HEK293T (cell line): ENCODE measurements at regions of chr14 and their contacts with region 1.

Region 1: DNA sequence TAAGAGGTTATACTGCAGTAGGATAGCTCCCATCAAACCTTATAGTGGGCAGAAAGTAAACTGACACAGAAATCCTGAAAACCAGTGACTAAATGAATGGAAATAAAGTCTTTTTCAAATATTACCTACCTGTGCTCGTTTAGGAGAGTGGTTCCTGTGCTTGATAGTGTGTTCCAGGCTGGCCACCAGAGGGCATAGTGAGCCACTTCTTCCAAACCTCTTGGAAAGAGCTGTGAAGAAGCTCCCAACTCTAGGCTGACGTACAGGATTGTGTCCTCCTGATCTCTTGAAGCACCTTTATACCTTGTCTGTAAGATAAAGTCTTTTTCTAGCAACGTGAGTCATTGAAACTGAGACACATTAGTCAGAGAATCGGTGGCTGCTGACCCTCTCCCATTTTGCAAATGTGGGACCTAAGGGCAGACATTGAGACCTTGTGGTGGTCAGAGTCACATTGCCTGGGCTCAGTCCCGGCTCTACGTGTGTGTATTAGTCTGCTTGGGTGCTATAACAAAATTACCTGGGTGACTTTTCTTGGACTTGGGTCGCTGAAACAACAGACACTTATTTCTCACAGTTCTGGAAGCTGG is 17.6 kb downstream of the TDP1 start:
- DNase-seq: peak; percentile 72

Region 2: GRCh38 chr14:89936658-89937185 is 36.6 kb before region 1 on chr14:
- CTCF ChIA-PET with region 1: interaction called, 15 read pairs
- POLR2A ChIA-PET with region 1: no interaction called
- DNase-seq: no peak

Region 3: DNA sequence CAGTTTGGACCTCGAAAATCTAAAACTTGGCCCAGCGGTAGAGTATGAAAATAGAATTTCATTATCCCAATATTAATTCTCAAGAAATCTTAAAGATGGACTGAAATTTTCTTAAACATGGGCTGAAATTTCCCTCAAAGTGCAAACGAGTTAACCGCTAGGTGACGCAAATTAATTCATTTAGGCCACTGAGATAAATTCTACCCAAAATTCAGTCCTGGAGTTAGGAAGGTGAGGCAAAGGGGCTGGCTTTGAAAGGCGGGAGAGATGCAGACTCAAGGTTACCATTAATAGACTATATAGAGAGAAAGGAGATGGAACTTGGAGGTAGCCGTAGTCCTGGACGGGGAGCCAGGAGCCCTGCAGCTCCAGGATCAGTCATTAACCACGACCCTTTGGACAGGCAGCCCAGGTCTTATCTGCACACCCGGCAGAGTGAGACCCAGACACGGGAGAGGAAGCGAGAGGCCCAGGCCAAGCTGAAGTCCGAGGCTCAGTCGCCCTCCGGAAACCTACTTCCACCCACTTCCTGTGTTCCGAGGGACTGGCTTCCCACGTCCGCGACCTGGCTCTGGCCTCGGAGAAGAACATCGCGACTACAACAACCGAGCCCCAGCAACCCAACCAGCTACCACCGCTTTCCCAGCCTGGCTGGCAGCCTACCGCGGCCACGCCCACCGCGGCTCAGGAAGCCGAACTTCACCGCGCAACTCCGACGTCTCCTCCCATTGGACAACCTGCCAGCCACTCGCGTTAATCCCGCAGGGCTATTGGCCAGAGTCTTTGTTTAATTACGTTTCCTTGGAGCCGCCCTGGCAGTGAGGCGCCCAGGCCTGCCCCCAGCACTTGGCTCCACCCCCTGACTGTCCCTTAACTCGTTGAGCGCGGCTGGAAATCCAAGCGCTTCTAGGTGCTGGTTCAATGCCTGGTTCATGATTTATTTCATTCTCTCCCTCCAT is 19.0 kb before region 1 on chr14 and contains the start of gene EFCAB11:
- CTCF ChIA-PET with region 1: interaction called, 13 read pairs
- POLR2A ChIA-PET with region 1: interaction called, 3 read pairs
- DNase-seq: peak; percentile 92

Region 4: DNA sequence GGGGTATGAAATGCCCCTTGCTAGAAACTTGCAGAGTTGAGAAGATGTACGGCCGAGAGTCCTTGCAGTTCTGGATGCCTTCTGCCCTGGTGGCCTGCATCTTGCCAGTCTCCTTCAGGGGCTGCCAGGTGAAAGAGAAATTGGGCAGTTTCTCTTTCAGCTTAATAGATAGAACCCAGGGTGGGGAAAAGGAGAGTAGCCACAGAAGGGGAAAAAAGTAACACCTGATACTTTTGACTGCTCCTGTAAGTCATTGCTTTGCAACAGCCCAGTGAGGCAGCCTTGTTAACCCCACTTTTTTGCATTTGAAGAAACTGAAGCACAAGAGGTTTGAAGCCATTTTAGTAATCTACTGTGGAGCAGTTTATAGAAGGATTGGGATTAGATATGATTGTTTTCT is 10.0 kb after region 1 on chr14:
- CTCF ChIA-PET with region 1: interaction called, 18 read pairs
- POLR2A ChIA-PET with region 1: no interaction called
- DNase-seq: no peak

Region 5: DNA sequence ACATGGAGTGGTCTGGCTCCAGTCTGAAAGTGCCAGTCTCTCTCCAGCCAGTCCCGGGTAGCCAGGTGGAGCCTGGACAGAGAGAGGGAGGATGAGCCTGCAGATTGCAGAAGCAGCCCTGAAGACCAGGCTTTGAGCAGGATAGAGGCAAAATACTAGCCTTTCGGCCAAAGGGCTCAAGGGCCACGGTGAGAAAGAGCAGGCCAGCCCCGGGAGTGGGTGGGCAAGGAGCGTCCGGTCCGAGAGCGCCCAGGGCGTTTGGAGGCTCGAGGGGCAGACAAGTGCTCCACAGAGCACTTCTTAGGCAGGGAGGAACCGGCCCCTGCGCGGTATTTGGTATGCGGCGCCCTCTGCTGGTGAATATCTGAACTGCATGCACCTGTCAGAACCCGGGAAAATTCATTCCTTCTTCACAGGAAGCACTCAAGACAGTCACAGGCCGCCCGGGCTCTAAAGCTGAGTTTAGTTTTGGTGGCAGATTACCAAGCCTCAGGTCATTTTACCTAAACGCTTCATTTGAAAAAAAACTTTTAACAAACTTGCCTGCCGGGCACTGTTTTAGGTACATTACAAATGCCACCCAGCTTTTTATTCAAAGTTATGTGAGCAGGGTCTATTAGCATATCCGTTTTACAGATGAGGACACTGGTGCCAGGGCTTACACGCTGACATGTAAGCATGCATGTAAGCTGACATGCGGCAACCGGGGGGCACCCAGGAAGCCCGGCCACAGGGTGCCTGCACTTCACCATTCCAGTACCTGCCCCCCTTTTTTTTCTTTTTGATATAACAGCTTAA is 262.0 kb after region 1 on chr14:
- CTCF ChIA-PET with region 1: interaction called, 13 read pairs
- POLR2A ChIA-PET with region 1: no interaction called
- DNase-seq: peak; percentile 84